ENCODE measurements at regions of chr9 and their contacts with region 1.

Region 1: GRCh38 chr9:75890472-75891276 is at the start of gene PCSK5:
- DNase-seq: peak; percentile 69 to 92 (median 81)
- ATAC-seq: peak; percentile 91
- H3K4me3 ChIP-seq: peak within 1 kb of the TSS; percentile 76
- H3K4me3 Mint-ChIP-seq: peak within 1 kb of the TSS; percentile 93
- H3K27ac ChIP-seq: peak within 1 kb of the TSS; percentile 11 to 63
- H3K27ac Mint-ChIP-seq: peak within 1 kb of the TSS; percentile 83
- H3K4me1 ChIP-seq: peaks cover 33% of the 10 kb centered on the region
- H3K4me1 Mint-ChIP-seq: peaks cover 50% of the 10 kb centered on the region
- H3K27me3 ChIP-seq: no peaks in the 10 kb centered on the region
- H3K27me3 Mint-ChIP-seq: no peaks in the 10 kb centered on the region
- CTCF ChIP-seq: no peak
- total RNA-seq, gene PCSK5: 14.4 to 15.2 TPM

Region 2: GRCh38 chr9:75644649-75645048 is 246.0 kb before region 1 on chr9:
- CTCF ChIA-PET with region 1: no interaction called
- POLR2A ChIA-PET with region 1: no interaction called
- intact Hi-C with region 1: no loop called
- DNase-seq: no peak
- ATAC-seq: no peak
- H3K4me3 ChIP-seq: no peak overlapping the region
- H3K4me3 Mint-ChIP-seq: no peak overlapping the region
- H3K27ac ChIP-seq: no peak overlapping the region
- H3K27ac Mint-ChIP-seq: no peak overlapping the region
- H3K4me1 ChIP-seq: no peaks in the 10 kb centered on the region
- H3K4me1 Mint-ChIP-seq: no peaks in the 10 kb centered on the region
- H3K27me3 ChIP-seq: no peaks in the 10 kb centered on the region
- H3K27me3 Mint-ChIP-seq: peaks cover 6% of the 10 kb centered on the region
- CTCF ChIP-seq: no peak

Region 3: GRCh38 chr9:75953218-75953617 is 62.5 kb after region 1 on chr9:
- CTCF ChIA-PET with region 1: no interaction called
- POLR2A ChIA-PET with region 1: no interaction called
- intact Hi-C with region 1: loop called in 1 of 2 experiments (anchors 10 kb)
- DNase-seq: no peak
- ATAC-seq: no peak
- H3K4me3 ChIP-seq: no peak overlapping the region
- H3K4me3 Mint-ChIP-seq: no peak overlapping the region
- H3K27ac ChIP-seq: no peak overlapping the region
- H3K27ac Mint-ChIP-seq: no peak overlapping the region
- H3K4me1 ChIP-seq: no peaks in the 10 kb centered on the region
- H3K4me1 Mint-ChIP-seq: peaks cover 28% of the 10 kb centered on the region
- H3K27me3 ChIP-seq: no peaks in the 10 kb centered on the region
- H3K27me3 Mint-ChIP-seq: no peaks in the 10 kb centered on the region
- CTCF ChIP-seq: no peak

Region 4: GRCh38 chr9:76067696-76068095 is 177.0 kb after region 1 on chr9:
- CTCF ChIA-PET with region 1: no interaction called
- POLR2A ChIA-PET with region 1: no interaction called
- intact Hi-C with region 1: no loop called
- DNase-seq: no peak
- ATAC-seq: no peak
- H3K4me3 ChIP-seq: no peak overlapping the region
- H3K4me3 Mint-ChIP-seq: no peak overlapping the region
- H3K27ac ChIP-seq: no peak overlapping the region
- H3K27ac Mint-ChIP-seq: no peak overlapping the region
- H3K4me1 ChIP-seq: no peaks in the 10 kb centered on the region
- H3K4me1 Mint-ChIP-seq: peaks cover 7% of the 10 kb centered on the region
- H3K27me3 ChIP-seq: no peaks in the 10 kb centered on the region
- H3K27me3 Mint-ChIP-seq: no peaks in the 10 kb centered on the region
- CTCF ChIP-seq: no peak